ENCODE measurements at regions of chr22 and their contacts with region 1.

Region 1: DNA sequence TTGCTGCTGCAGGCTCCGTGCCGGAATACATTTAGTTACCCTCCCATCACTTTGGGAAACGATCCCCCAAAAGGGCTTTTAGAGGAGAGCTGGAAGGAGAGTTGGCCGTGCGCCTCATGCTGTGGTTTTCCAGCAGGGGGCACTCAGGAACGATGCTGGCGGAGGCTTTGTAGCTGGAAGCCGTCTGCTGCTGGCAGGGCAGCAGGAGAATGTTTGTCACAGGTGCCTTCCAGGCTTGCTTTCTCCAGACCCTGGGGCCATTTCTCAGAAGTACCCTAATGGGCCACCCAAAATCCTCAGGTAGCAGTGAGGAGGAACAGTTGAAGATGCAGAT is 30.0 kb upstream of the CABP7 start:
- DNase-seq: peak; percentile 86
- H3K4me3 ChIP-seq: peak overlapping the region; percentile 13
- H3K27ac ChIP-seq: peak overlapping the region; percentile 71
- H3K4me1 ChIP-seq: peaks cover 63% of the 10 kb centered on the region
- H3K27me3 ChIP-seq: no peaks in the 10 kb centered on the region
- CTCF ChIP-seq: peak; percentile 91

Region 2: GRCh38 chr22:29641042-29641699 is 48.7 kb before region 1 on chr22:
- CTCF ChIA-PET with region 1: interaction called, 7 read pairs
- POLR2A ChIA-PET with region 1: interaction called, 4 read pairs
- intact Hi-C with region 1: loop called (anchors 1 kb)
- DNase-seq: peak; percentile 99
- H3K4me3 ChIP-seq: no peak overlapping the region
- H3K27ac ChIP-seq: peak overlapping the region; percentile 32
- H3K4me1 ChIP-seq: peaks cover 31% of the 10 kb centered on the region
- H3K27me3 ChIP-seq: peaks cover 18% of the 10 kb centered on the region
- CTCF ChIP-seq: no peak

Region 3: DNA sequence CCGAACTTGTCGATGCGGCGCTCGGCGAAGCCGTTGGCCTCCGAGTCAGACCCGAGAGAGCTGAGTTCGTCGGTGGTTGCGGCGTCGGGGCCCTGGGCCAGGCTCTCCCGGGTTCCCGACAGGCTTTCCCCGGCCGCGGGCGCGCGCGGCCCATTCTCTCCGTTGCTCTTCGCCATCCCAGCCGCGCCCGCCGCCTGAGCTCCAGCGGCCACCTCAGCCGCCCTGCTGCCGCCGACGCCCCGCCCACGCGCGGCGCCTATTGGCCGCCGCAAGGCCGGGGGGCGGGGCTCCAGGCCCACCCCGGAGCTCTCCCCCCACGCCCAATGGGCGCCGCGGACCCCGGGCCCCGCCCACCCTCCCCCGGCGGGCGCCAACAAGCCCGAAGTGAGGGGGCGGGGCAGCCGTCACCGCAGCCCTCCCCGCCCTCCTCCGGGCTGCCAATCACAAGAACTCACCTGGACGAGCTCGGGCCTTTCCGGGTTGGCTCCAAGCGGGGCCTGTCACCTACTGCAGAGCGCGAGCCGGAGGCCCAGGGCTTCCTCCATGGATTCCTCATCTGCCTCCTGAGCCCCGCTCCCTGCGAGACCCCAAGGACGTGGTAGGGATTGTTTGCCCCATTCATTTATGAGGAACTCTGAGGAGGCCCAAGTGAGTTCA is 637.0 kb after region 1 on chr22 and contains the start of gene TBC1D10A:
- CTCF ChIA-PET with region 1: no interaction called
- POLR2A ChIA-PET with region 1: interaction called, 21 read pairs
- intact Hi-C with region 1: no loop called
- DNase-seq: peak; percentile 95
- H3K4me3 ChIP-seq: peak within 1 kb of the TSS; percentile 80
- H3K27ac ChIP-seq: peak within 1 kb of the TSS; percentile 80
- H3K4me1 ChIP-seq: peaks cover 23% of the 10 kb centered on the region
- H3K27me3 ChIP-seq: no peaks in the 10 kb centered on the region
- CTCF ChIP-seq: no peak
- total RNA-seq, gene TBC1D10A: 8.4 and 10.6 TPM in 2 replicates

Measured in A673 (cell line).